Activated CD4-positive, alpha-beta T cell treated with anti-CD3 and anti-CD28 coated beads for 36 hours (primary cell): ENCODE measurements at regions of chr3 and their contacts with region 1.

Region 1: DNA sequence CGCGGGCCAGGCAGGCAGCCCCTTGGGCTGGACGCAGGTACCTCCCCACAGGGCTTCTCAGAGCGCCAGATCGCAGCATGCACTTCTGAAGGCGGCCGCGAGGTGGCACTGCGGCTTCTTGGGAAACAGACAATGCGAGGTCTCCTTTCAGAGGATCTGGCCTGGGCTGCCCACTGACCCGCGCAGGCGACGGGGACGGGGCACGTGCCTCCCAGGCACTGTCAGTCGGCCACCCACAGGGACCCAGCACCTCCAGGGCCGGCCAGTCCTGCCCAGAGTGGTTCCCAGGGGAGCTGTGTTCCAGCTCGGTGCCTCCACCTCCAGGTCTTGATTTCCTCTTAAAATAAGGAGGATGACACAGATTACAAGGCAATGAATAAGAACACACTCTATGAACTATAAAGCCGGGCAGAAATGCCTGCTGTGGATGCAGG is 24.4 kb upstream of the TXNRD3 start:
- DNase-seq: peak; percentile 88
- ATAC-seq: peak; percentile 84
- H3K4me3 Mint-ChIP-seq: no peak overlapping the region
- H3K27ac Mint-ChIP-seq: no peak overlapping the region
- H3K4me1 Mint-ChIP-seq: peaks cover 4% of the 10 kb centered on the region
- H3K27me3 Mint-ChIP-seq: peaks cover 3% of the 10 kb centered on the region

Region 2: GRCh38 chr3:126659945-126660886 is 19.1 kb before region 1 on chr3:
- CTCF ChIA-PET with region 1: interaction called, 10 read pairs
- POLR2A ChIA-PET with region 1: no interaction called
- intact Hi-C with region 1: no loop called
- DNase-seq: no peak
- ATAC-seq: no peak
- H3K4me3 Mint-ChIP-seq: no peak overlapping the region
- H3K27ac Mint-ChIP-seq: no peak overlapping the region
- H3K4me1 Mint-ChIP-seq: peaks cover 2% of the 10 kb centered on the region
- H3K27me3 Mint-ChIP-seq: peaks cover 3% of the 10 kb centered on the region